Calu3 (cell line): ENCODE measurements at regions of chr11 and their contacts with region 1.

Region 1: DNA sequence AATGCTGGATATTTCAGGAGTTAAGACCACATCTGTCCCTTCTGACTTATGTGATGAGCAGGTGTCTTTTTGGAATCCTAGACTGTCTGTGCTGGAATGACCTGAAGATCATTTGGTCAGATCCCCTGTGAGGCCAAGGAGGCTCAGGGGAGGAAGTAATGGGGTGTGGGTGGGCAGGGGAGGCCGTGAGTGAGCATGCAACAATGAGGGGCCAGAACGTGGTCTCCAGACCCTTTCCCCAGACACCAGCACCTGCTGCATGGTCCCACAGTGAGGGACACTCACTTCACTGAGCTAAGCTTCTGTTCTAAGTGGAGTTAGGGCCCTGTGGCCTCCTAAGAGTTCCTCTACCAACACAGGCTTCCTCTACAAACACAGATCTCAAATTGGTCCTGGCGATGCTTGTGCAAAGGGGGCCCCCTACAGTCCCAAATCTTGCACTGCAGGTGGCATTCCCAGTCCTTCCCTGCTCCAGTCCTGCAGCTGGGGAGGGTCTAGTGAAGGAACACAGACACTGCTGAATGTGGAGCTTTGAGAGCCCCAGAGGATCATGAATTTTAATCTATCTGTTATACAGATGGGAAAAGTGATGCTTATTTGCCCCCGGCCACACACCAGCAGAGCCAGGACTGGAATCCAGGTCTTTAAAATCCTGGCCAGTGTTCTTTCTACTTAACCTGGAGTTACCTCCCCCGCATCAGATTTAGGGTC is 7.4 kb downstream of the USP2 start:
- DNase-seq: peak; percentile 80
- H3K4me3 Mint-ChIP-seq: no peak overlapping the region
- H3K27ac Mint-ChIP-seq: no peak overlapping the region
- H3K4me1 Mint-ChIP-seq: peaks cover 8% of the 10 kb centered on the region
- H3K27me3 Mint-ChIP-seq: no peaks in the 10 kb centered on the region
- CTCF ChIP-seq: peak; percentile 68

Region 2: DNA sequence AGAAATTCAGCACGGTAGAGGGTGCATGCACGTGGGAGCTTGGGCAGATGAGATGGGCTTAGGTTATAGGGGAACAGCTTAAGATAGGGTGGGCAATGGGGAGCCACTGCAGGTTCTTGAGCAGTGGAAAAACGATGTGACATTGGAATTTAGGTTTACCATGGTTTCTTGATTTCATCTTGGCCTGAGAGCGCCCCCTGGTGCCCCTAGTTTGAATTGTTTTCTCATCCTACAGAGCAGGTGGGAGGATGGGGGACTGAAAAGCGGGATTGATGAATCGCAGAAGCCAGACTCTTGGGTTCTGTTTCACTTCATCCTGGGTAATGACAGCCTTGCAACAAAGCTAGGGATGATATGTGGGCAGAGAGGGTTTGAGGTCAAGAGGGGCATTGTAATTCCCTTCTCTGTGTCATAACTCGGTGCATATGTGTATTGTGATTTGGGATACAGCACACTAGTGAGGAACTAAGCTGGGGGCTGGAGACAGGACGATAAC is 50.5 kb before region 1 on chr11:
- CTCF ChIA-PET with region 1: interaction called, 3 read pairs
- intact Hi-C with region 1: loop called (anchors 5 kb)
- DNase-seq: peak; percentile 70
- H3K4me3 Mint-ChIP-seq: no peak overlapping the region
- H3K27ac Mint-ChIP-seq: no peak overlapping the region
- H3K4me1 Mint-ChIP-seq: no peaks in the 10 kb centered on the region
- H3K27me3 Mint-ChIP-seq: peaks cover 18% of the 10 kb centered on the region
- CTCF ChIP-seq: peak; percentile 27

Region 3: DNA sequence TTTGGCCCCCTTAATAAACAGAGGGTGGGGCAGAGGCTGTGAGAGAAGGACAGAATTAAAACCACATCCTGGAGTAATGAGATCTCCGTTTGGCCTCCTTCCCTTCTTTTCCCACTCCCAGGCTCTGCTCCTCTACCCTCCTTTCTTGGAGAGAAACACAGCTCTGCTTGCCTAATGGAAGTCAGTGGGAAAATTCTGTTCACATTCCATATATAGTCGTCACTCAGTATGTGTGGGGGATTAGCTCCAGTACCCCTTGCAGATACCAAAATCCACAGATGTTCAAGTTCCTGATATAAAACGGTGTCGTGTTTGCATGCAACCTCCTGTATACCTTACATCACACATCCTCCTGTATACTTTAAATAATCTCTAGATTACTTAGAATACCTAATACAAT is 86.5 kb after region 1 on chr11:
- CTCF ChIA-PET with region 1: no interaction called
- intact Hi-C with region 1: no loop called
- DNase-seq: no peak
- H3K4me3 Mint-ChIP-seq: no peak overlapping the region
- H3K27ac Mint-ChIP-seq: no peak overlapping the region
- H3K4me1 Mint-ChIP-seq: peaks cover 8% of the 10 kb centered on the region
- H3K27me3 Mint-ChIP-seq: peaks cover 50% of the 10 kb centered on the region
- CTCF ChIP-seq: no peak